Left ventricle myocardium superior (tissue), 1 donor: ENCODE measurements at regions of chr6 and their contacts with region 1.

Region 1: GRCh38 chr6:140684776-140685550 is 1310.5 kb upstream of the CITED2 start:
- DNase-seq: no peak
- ATAC-seq: no peak

Region 2: DNA sequence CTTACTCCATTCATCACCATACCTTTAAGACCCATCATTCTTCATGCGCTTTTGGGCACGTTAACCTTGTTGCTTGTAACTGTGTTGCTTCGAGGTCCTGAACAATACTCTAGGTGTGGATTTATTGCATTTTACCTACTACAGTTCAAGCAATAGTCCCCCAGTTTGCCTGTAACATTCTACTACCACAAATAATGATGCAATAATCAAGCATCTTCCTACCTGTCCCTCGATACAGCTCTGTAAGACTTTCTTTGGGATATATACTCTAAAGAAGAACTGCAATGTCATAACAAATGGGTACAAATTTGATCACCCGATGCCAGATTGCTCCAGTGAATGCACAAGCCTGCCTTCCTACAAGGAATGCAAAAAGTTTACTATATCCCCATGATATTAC is 105.1 kb after region 1 on chr6:
- intact Hi-C with region 1: loop called (anchors 5 kb)
- DNase-seq: no peak
- ATAC-seq: no peak